ENCODE measurements at regions of chr10 and their contacts with region 1.

Region 1: GRCh38 chr10:97222326-97222961 is 36.7 kb upstream of the SLIT1 start:
- DNase-seq: no peak
- ATAC-seq: no peak
- H3K4me3 ChIP-seq: no peak overlapping the region
- H3K27ac ChIP-seq: no peak overlapping the region
- H3K4me1 ChIP-seq: peaks cover 7% of the 10 kb centered on the region; the same call in 1 of the 2 replicates
- H3K27me3 ChIP-seq: no peaks in the 10 kb centered on the region
- CTCF ChIP-seq: no peak
- EP300 ChIP-seq: no peak
- POLR2A ChIP-seq: no peak
- RAD21 ChIP-seq: no peak

Region 2: DNA sequence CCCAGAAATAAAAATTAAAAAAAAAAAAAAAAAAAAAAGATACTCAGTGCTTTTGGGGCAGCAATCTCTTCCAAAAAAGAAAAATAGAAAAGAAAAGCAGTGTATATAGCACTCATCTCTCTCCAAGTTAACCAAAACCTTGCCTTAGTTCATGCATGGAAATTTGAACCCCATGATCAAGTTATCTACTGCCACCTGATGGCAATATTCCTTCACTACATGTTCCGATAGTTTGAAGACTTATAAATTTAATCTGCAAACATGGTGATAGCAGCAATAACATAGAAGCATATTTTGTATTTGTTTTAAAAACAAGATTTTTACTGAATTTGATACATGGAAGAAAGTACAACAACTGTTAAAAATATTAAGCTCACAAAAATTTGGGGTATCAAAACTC is 12.0 kb after region 1 on chr10:
- CTCF ChIA-PET with region 1: interaction called, 16 read pairs
- POLR2A ChIA-PET with region 1: no interaction called
- RAD21 ChIA-PET with region 1: no interaction called
- SMC1A ChIA-PET with region 1: interaction called, 6 read pairs
- in situ Hi-C with region 1: no loop called
- intact Hi-C with region 1: no loop called
- DNase-seq: no peak
- ATAC-seq: peak; percentile 39; the same call in 2 of the 3 replicates
- H3K4me3 ChIP-seq: no peak overlapping the region
- H3K27ac ChIP-seq: no peak overlapping the region
- H3K4me1 ChIP-seq: no peaks in the 10 kb centered on the region
- H3K27me3 ChIP-seq: no peaks in the 10 kb centered on the region
- CTCF ChIP-seq: peak; percentile 36 to 54 (median 50); a peak in 5 of 6 replicates
- EP300 ChIP-seq: no peak
- POLR2A ChIP-seq: no peak
- RAD21 ChIP-seq: peak; percentile 66

Measured in GM12878 (cell line).